Mammary epithelial cell (primary cell): ENCODE measurements at regions of chr6 and their contacts with region 1.

Region 1: GRCh38 chr6:42166444-42167141 is 6.6 kb upstream of the GUCA1A start:
- DNase-seq: peak; percentile 78
- H3K4me3 ChIP-seq: no peak overlapping the region
- H3K27ac ChIP-seq: no peak overlapping the region
- H3K4me1 ChIP-seq: peaks cover 8% of the 10 kb centered on the region
- H3K27me3 ChIP-seq: no peaks in the 10 kb centered on the region
- CTCF ChIP-seq: peak; percentile 83 to 96

Region 2: GRCh38 chr6:42075159-42075838 is 91.3 kb before region 1 on chr6:
- CTCF ChIA-PET with region 1: no interaction called
- dilution Hi-C with region 1: no loop called
- in situ Hi-C with region 1: loop called in 1 of 2 experiments (anchors 5 kb)
- intact Hi-C with region 1: loop called (anchors 1 kb)
- DNase-seq: peak; percentile 67
- H3K4me3 ChIP-seq: no peak overlapping the region
- H3K27ac ChIP-seq: no peak overlapping the region
- H3K4me1 ChIP-seq: no peaks in the 10 kb centered on the region
- H3K27me3 ChIP-seq: no peaks in the 10 kb centered on the region
- CTCF ChIP-seq: peak; percentile 91 to 94

Region 3: GRCh38 chr6:42099340-42100028 is 67.1 kb before region 1 on chr6:
- CTCF ChIA-PET with region 1: no interaction called
- dilution Hi-C with region 1: no loop called
- in situ Hi-C with region 1: no loop called
- intact Hi-C with region 1: loop called (anchors 1 kb)
- DNase-seq: peak; percentile 96
- H3K4me3 ChIP-seq: peak overlapping the region in 1 of 3 experiments; percentile 20
- H3K27ac ChIP-seq: peak overlapping the region; percentile 90
- H3K4me1 ChIP-seq: peaks cover 29% of the 10 kb centered on the region
- H3K27me3 ChIP-seq: no peaks in the 10 kb centered on the region
- CTCF ChIP-seq: no peak

Region 4: GRCh38 chr6:42217519-42218367 is 51.1 kb after region 1 on chr6 and contains the start of gene MRPS10:
- CTCF ChIA-PET with region 1: interaction called, 9 read pairs
- dilution Hi-C with region 1: no loop called
- in situ Hi-C with region 1: no loop called
- intact Hi-C with region 1: loop called (anchors 1 kb)
- DNase-seq: peak; percentile 90
- H3K4me3 ChIP-seq: peak within 1 kb of the TSS; percentile 78 to 100 (median 80)
- H3K27ac ChIP-seq: peak within 1 kb of the TSS; percentile 83
- H3K4me1 ChIP-seq: peaks cover 27% of the 10 kb centered on the region
- H3K27me3 ChIP-seq: no peaks in the 10 kb centered on the region
- CTCF ChIP-seq: no peak
- total RNA-seq, gene MRPS10: 41.2 to 50.9 TPM

Region 5: GRCh38 chr6:42230345-42231321 is 64.0 kb after region 1 on chr6:
- CTCF ChIA-PET with region 1: interaction called, 6 read pairs
- dilution Hi-C with region 1: loop called (anchors 5 kb)
- in situ Hi-C with region 1: no loop called
- intact Hi-C with region 1: loop called (anchors 1 kb)
- DNase-seq: no peak
- H3K4me3 ChIP-seq: no peak overlapping the region
- H3K27ac ChIP-seq: peak overlapping the region; percentile 45
- H3K4me1 ChIP-seq: peaks cover 38% of the 10 kb centered on the region
- H3K27me3 ChIP-seq: no peaks in the 10 kb centered on the region
- CTCF ChIP-seq: peak; percentile 68 to 69

Region 6: GRCh38 chr6:42294759-42295158 is 128.2 kb after region 1 on chr6:
- CTCF ChIA-PET with region 1: interaction called, 30 read pairs
- dilution Hi-C with region 1: no loop called
- in situ Hi-C with region 1: no loop called
- intact Hi-C with region 1: no loop called
- DNase-seq: peak; percentile 98
- H3K4me3 ChIP-seq: no peak overlapping the region
- H3K27ac ChIP-seq: peak overlapping the region; percentile 90
- H3K4me1 ChIP-seq: peaks cover 60% of the 10 kb centered on the region
- H3K27me3 ChIP-seq: no peaks in the 10 kb centered on the region
- CTCF ChIP-seq: no peak